Vagina (tissue), 2 donors: ENCODE measurements at regions of chr2 and their contacts with region 1.

Region 1: DNA sequence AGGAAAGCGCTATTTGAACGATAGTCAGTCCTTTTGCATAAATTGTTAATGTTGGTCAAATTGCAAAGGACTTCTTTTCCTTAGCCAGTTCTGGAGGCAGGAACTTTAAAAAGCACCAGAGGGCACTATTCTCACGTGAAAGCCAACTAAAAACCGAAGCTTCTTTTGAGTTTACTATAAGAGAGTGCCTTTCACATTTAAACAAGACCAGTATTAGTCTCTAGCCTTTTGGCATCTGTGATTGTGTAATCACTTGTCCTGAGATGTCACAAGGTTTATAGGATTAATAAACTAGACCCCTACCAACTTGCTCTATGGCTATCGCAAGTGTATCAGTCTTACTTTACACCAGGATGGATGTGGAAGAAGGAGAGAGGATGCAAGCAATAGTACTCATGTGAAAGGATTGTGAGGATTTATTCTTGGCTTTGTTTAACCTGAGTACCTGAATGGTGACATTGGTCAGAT is 14.4 kb upstream of the STAT4 start:
- DNase-seq: no peak
- H3K4me3 ChIP-seq: no peak overlapping the region
- H3K27ac ChIP-seq: no peak overlapping the region
- H3K4me1 ChIP-seq: peaks cover 20% of the 10 kb centered on the region
- H3K27me3 ChIP-seq: no peaks in the 10 kb centered on the region
- CTCF ChIP-seq: peak; percentile 28 to 73 (median 60)
- POLR2A ChIP-seq: no peak

Region 2: DNA sequence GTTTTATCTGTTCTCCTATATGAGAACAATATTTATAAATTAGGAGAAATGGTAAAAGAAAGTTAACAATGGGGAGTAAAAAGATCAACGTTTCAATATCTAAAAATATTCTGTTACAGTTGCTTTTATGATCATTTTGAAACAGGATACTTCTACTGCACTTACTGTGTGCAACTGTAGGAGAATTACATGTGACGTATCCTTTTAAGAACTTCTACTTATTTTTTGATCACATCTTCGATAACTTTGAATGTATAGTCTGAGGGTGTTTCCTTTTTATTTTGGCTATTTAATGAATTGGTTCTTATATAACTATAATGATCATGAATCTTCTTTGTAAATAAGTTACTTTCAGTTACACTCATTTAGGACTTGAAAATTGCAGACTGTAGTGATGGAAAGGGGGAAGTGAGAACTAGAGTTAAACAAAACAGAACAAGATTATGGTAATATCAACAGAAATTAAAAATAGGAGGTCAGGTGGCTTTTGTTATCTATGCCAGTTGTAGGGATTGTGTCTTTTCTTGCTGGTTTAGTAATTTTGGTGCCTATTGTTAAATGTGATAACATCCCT is 1212.6 kb before region 1 on chr2:
- intact Hi-C with region 1: no loop called
- DNase-seq: no peak
- H3K4me3 ChIP-seq: no peak overlapping the region
- H3K27ac ChIP-seq: no peak overlapping the region
- H3K4me1 ChIP-seq: no peaks in the 10 kb centered on the region
- H3K27me3 ChIP-seq: no peaks in the 10 kb centered on the region
- CTCF ChIP-seq: no peak
- POLR2A ChIP-seq: no peak

Region 3: GRCh38 chr2:191515551-191515950 is 350.3 kb after region 1 on chr2:
- intact Hi-C with region 1: loop called (anchors 5 kb)
- DNase-seq: no peak
- H3K4me3 ChIP-seq: no peak overlapping the region
- H3K27ac ChIP-seq: no peak overlapping the region
- H3K4me1 ChIP-seq: no peaks in the 10 kb centered on the region
- H3K27me3 ChIP-seq: no peaks in the 10 kb centered on the region
- CTCF ChIP-seq: no peak
- POLR2A ChIP-seq: no peak